Tibial artery (tissue), 4 donors: ENCODE measurements at regions of chr1 and their contacts with region 1.

Region 1: GRCh38 chr1:161997152-161997551 is 26.5 kb downstream of the OLFML2B start:
- DNase-seq: no peak
- H3K4me3 ChIP-seq: no peak overlapping the region
- H3K27ac ChIP-seq: no peak overlapping the region
- H3K4me1 ChIP-seq: peaks cover 0 to 23% (median 0%) of the 10 kb centered on the region in 4 donors
- H3K27me3 ChIP-seq: no peaks in the 10 kb centered on the region
- CTCF ChIP-seq: no peak

Region 2: DNA sequence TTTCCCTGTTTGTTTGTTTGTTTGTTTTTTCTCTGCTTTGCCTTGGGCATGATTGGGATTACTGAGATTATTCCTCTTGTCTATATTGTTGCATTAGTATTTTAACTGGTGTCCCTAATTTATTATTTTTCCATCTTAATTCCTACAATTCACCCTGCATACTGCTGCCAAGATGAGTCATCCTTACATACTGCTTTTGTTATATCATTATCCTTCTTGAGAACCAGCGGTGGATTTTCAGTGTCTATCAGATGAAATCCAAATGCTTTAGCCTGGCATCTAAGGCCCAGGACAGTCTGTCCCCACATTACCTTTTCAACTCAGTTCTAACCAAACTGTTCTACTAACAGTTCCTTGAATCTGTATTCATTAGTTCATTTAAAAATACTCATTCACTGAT is 75.2 kb before region 1 on chr1:
- intact Hi-C with region 1: loop called (anchors 2 kb)
- DNase-seq: no peak
- H3K4me3 ChIP-seq: no peak overlapping the region
- H3K27ac ChIP-seq: no peak overlapping the region
- H3K4me1 ChIP-seq: peaks cover 0 to 6% (median 2%) of the 10 kb centered on the region in 4 donors
- H3K27me3 ChIP-seq: no peaks in the 10 kb centered on the region
- CTCF ChIP-seq: no peak

Region 3: GRCh38 chr1:161946071-161946987 is 50.8 kb before region 1 on chr1:
- intact Hi-C with region 1: no loop called
- DNase-seq: no peak
- H3K4me3 ChIP-seq: no peak overlapping the region
- H3K27ac ChIP-seq: no peak overlapping the region
- H3K4me1 ChIP-seq: peaks cover 0 to 42% (median 14%) of the 10 kb centered on the region in 4 donors
- H3K27me3 ChIP-seq: no peaks in the 10 kb centered on the region
- CTCF ChIP-seq: no peak

Region 4: GRCh38 chr1:162056043-162056442 is 58.9 kb after region 1 on chr1:
- intact Hi-C with region 1: no loop called
- DNase-seq: peak; percentile 53 to 68
- H3K4me3 ChIP-seq: no peak overlapping the region
- H3K27ac ChIP-seq: no peak overlapping the region
- H3K4me1 ChIP-seq: peaks cover 0 to 3% (median 0%) of the 10 kb centered on the region in 4 donors
- H3K27me3 ChIP-seq: peaks cover 0 to 12% of the 10 kb centered on the region in 2 donors
- CTCF ChIP-seq: peak; percentile 82 to 97

Region 5: GRCh38 chr1:162168249-162168648 is 171.1 kb after region 1 on chr1:
- intact Hi-C with region 1: no loop called
- DNase-seq: no peak
- H3K4me3 ChIP-seq: no peak overlapping the region
- H3K27ac ChIP-seq: no peak overlapping the region
- H3K4me1 ChIP-seq: peaks cover 0 to 3% (median 0%) of the 10 kb centered on the region in 4 donors
- H3K27me3 ChIP-seq: no peaks in the 10 kb centered on the region
- CTCF ChIP-seq: no peak